ENCODE measurements at regions of chr2 and their contacts with region 1.

Region 1: DNA sequence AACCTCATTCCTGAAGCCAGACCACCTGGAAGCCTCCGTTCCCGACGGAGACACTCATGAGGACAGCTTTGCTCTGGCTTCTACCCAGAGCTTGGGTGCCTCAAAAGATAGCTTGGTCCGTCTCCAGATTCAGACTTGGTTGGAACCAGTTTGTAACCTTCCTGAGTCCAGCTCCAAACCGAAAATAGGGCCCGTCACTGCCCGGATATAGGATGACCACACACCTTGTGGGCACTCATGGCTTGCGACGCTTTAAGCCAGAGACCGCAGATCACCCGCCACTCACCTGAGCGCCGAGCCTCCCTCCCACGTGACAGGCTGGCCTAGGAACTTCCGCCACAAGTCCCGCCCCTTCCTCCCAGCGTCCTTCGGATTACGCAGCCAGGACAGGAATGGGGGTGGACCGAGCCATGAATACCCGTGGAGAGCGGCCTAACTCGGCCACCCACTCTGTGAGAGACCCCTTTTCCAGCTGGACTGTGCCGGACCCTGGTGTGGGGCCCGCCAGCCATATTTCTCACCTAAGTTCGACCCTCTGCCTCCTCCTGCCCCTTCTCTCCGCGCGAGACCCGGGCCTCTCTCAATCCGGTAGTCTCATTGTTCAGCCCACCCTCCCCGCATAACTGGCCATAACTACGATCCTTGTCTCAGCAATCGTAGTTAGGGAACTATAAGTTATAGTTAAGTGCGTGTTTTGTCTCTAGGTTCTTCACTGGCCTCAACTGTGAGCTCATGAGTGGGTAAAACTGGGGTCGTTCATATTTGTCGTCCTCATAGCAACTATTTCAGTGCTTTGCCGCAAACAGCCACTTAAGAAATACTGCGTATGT is at the start of gene MPV17:
- DNase-seq: peak; percentile 96
- ATAC-seq: peak; percentile 85
- H3K4me3 ChIP-seq: peak within 1 kb of the TSS; percentile 82 to 86 (median 83)
- H3K27ac ChIP-seq: peak within 1 kb of the TSS; percentile 91
- H3K4me1 ChIP-seq: peaks cover 33% of the 10 kb centered on the region
- H3K27me3 ChIP-seq: peaks cover 0 to 4% of the 10 kb centered on the region in 2 experiments; a peak in 1 of 5 replicates
- CTCF ChIP-seq: no peak
- EP300 ChIP-seq: 0 out of 4 replicates have a peak, but pooled peaks of 1 of the 2 experiments have one; percentile 45
- POLR2A ChIP-seq: peak; percentile 96 to 97
- RAD21 ChIP-seq: no peak; the same call in 1 of the 2 replicates
- total RNA-seq, gene MPV17: 37.0 and 48.9 TPM in 2 replicates

Region 2: DNA sequence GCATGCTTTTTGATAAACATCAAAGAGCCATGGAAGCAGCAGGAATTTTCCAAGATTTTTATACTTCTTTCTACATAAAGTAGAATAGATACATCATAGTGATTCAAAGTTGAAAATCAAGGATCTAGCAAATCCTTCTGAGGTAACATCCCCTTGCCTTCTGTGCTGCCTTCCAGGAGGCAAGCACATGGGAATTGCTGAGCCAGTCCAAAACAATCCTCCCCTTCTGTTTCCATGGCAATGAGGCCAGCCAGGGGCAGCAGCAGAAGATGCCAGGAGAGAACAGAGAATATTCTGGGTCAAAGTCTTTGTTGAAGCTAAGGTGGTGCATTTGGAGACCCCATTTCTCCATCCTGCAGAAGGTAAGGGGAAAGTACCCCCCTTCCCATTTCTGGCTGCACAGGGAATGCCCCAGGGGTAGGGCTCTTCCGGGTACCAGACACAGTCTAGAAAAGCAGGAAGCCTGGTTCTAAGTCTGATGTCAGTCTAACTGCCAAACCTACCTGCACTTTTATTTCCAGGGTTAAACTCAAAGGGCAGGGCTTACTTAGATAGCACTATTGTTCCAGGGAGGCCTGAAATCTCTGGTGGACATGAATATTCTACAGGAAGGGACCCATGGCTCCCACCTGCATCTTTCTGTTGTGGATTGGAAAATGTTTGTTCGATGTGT is 515.1 kb before region 1 on chr2:
- CTCF ChIA-PET with region 1: no interaction called
- POLR2A ChIA-PET with region 1: no interaction called
- in situ Hi-C with region 1: no loop called
- intact Hi-C with region 1: no loop called
- DNase-seq: no peak
- ATAC-seq: no peak
- H3K4me3 ChIP-seq: no peak overlapping the region
- H3K27ac ChIP-seq: no peak overlapping the region
- H3K4me1 ChIP-seq: no peaks in the 10 kb centered on the region
- H3K27me3 ChIP-seq: peaks cover 4 to 29% of the 10 kb centered on the region in 2 experiments; a peak in 3 of 5 replicates
- CTCF ChIP-seq: no peak
- EP300 ChIP-seq: no peak
- POLR2A ChIP-seq: no peak
- RAD21 ChIP-seq: no peak

Region 3: DNA sequence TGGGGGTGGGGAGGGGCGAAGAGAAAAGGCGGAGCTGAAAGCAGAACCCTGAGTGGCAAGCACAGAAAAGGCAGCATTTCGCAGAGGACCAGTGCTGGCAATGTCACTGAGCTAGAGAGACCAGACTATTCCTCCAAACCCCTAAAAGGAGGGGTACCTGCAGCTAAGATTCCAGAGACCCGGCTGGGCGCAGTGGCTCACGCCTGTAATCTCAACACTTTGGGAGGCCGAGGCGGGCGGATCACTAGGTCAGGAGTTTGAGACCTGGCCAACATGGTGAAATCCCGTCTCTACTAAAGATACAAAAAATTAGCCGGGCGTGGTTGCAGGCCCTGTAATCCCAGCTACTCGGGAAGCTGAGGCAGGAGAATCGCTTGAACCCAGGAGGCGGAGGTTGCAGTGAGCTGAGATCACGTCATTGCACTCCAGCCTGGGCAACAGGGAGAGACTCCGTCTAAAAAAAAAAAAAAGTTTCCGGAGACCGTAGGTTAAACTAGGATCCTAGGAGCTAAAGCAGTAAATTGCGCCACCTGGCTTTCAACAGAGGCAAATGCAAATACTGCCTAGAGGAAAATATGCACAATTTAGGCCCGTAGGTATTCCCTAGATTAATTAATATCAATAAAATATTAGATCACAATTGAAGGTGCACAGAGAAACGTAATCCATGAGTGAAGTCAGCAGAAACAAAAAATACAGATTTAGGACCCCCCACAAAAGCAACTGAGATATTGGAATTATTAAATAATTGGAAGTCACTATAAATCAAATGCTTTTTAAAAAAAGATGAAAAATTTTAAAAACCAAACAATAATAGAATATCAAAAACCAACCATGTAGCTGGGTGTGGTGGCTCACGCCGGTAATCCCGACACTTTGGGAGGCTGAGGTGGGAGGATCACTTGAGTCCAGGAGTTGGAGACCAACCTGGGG is 19.6 kb before region 1 on chr2:
- CTCF ChIA-PET with region 1: interaction called, 8 read pairs
- POLR2A ChIA-PET with region 1: interaction called, 10 read pairs
- in situ Hi-C with region 1: no loop called
- intact Hi-C with region 1: loop called (anchors 1 kb)
- DNase-seq: peak; percentile 86
- ATAC-seq: peak; percentile 60
- H3K4me3 ChIP-seq: peak overlapping the region; percentile 49 to 77 (median 63)
- H3K27ac ChIP-seq: peak overlapping the region; percentile 42
- H3K4me1 ChIP-seq: peaks cover 33% of the 10 kb centered on the region
- H3K27me3 ChIP-seq: peaks cover 0 to 5% of the 10 kb centered on the region in 2 experiments; a peak in 3 of 5 replicates
- CTCF ChIP-seq: peak; percentile 88
- EP300 ChIP-seq: no peak
- POLR2A ChIP-seq: peak in 1 of 2 experiments; percentile 42; a peak in 1 of 4 replicates
- RAD21 ChIP-seq: peak; percentile 75

Region 4: DNA sequence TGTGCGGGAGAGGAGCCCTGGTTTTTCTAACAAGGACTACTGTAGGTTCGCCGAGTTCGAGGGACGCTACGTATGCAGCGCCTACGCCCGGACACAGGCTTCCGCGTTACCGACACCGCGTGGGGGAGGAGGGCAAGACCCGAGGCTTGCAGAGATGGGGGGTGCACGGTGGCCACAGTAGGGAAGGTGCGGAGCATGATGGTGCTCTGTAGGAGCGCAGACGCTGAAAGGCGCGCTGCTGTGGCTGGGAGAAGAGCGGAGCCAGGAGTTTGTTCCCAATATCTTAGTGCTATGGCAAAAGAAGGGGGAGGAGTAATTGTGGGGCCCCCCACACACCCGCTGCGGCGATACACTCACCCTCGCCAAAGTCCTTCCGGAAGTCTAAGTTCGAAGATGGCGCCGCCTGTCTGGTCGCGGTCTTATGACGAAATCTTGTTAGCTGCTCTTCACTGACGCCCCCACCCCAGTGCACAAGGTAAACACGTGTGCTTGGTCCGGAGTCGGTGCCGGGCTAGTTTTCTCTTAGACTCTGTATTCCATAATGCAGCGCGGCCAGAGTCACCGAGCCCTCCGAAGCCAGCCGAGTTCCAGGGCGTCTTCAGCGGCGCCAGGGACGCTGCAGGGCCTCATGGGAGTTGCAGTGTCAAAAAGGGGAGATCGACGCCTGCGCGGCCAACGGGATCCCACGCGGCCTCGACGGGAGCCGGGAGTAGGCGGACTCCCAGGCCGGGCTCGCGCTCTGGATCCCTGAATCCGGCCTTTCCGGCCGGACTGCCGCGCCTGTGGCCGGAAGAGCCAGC is 33.6 kb after region 1 on chr2 and contains the start of gene GTF3C2:
- CTCF ChIA-PET with region 1: interaction called, 3 read pairs
- POLR2A ChIA-PET with region 1: interaction called, 73 read pairs
- in situ Hi-C with region 1: no loop called
- intact Hi-C with region 1: loop called (anchors 1 kb)
- DNase-seq: peak; percentile 99
- ATAC-seq: peak; percentile 88
- H3K4me3 ChIP-seq: peak within 1 kb of the TSS; percentile 72 to 91 (median 85)
- H3K27ac ChIP-seq: peak within 1 kb of the TSS; percentile 96
- H3K4me1 ChIP-seq: peaks cover 64% of the 10 kb centered on the region
- H3K27me3 ChIP-seq: no peaks in the 10 kb centered on the region; a peak in 1 of 5 replicates
- CTCF ChIP-seq: 0 out of 2 replicates have a peak, but pooled peaks have one; percentile 25
- EP300 ChIP-seq: peak in 1 of 2 experiments; percentile 55; a peak in 3 of 4 replicates
- POLR2A ChIP-seq: peak; percentile 58 to 60
- RAD21 ChIP-seq: peak; percentile 45; the same call in 1 of the 2 replicates
- total RNA-seq, gene GTF3C2: 77.5 and 80.0 TPM in 2 replicates

Region 5: GRCh38 chr2:27370026-27370815 is 47.2 kb after region 1 on chr2 and contains the starts of genes EIF2B4 and SNX17:
- CTCF ChIA-PET with region 1: interaction called, 15 read pairs
- POLR2A ChIA-PET with region 1: interaction called, 41 read pairs
- in situ Hi-C with region 1: loop called (anchors 5 kb)
- intact Hi-C with region 1: loop called (anchors 1 kb)
- DNase-seq: peak; percentile 99
- ATAC-seq: peak; percentile 89
- H3K4me3 ChIP-seq: peak within 1 kb of the TSS; percentile 88 to 96 (median 95)
- H3K27ac ChIP-seq: peak within 1 kb of the TSS; percentile 83
- H3K4me1 ChIP-seq: peaks cover 41% of the 10 kb centered on the region
- H3K27me3 ChIP-seq: no peaks in the 10 kb centered on the region; a peak in 1 of 5 replicates
- CTCF ChIP-seq: peak; percentile 100
- EP300 ChIP-seq: peak; percentile 53 to 68
- POLR2A ChIP-seq: peak in 1 of 2 experiments; percentile 92; a peak in 2 of 4 replicates
- RAD21 ChIP-seq: peak; percentile 97
- total RNA-seq, gene EIF2B4: 91.5 and 105 TPM in 2 replicates
- total RNA-seq, gene SNX17: 94.9 and 109 TPM in 2 replicates

Region 6: DNA sequence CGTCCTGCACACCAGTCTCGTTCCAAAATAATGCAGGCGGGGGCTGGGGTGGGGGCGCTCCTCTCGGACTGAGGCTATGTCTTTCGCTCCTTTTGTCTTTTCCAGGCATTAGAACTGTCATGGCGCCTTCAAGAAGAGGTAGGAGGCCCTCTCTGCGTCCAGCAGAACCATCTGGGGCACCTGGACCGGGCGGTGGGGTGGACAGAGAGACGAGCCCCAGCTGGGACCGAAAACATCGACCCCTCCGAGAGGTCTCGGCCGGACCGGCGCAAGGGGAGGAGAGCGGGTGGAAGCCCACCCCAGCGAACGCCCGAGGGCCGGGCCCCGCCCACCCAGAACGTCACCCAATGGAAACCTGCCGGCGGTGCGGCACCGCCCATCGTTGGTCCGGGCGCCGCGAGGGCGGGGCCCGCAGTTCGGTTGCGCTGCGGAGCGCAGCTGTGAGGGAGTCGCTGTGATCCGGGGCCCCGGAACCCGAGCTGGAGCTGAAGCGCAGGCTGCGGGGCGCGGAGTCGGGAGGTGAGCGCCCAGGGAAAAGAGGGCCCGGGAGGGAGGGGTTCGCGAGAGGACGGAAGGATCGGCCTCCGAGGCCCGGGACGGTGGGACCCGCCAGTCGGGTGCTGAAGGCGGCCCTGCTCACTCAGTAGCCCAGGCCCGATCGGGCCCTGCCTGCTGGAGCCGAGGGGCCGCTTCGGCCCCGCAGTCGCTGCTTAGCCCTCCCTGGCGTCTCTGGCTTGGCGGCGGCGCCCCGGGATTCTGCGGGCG is 105.4 kb after region 1 on chr2 and contains the start of gene NRBP1:
- CTCF ChIA-PET with region 1: no interaction called
- POLR2A ChIA-PET with region 1: interaction called, 11 read pairs
- in situ Hi-C with region 1: no loop called
- intact Hi-C with region 1: no loop called
- DNase-seq: peak; percentile 91
- ATAC-seq: peak; percentile 90
- H3K4me3 ChIP-seq: peak within 1 kb of the TSS; percentile 86 to 100 (median 100)
- H3K27ac ChIP-seq: peak within 1 kb of the TSS; percentile 99
- H3K4me1 ChIP-seq: peaks cover 58% of the 10 kb centered on the region
- H3K27me3 ChIP-seq: no peaks in the 10 kb centered on the region; a peak in 1 of 5 replicates
- CTCF ChIP-seq: peak; percentile 52
- EP300 ChIP-seq: peak in 1 of 2 experiments; percentile 18; a peak in 2 of 4 replicates
- POLR2A ChIP-seq: peak; percentile 93 to 94
- RAD21 ChIP-seq: peak; percentile 64; the same call in 1 of the 2 replicates
- total RNA-seq, gene NRBP1: 165 and 222 TPM in 2 replicates